ENCODE measurements at regions of chr12 and their contacts with region 1.

Region 1: GRCh38 chr12:1117970-1118563 is 127.0 kb downstream of the ERC1 start:
- DNase-seq: peak; percentile 60 to 94 (median 79)
- H3K4me3 ChIP-seq: no peak overlapping the region
- H3K27ac ChIP-seq: no peak overlapping the region
- H3K4me1 ChIP-seq: peaks cover 7 to 11% of the 10 kb centered on the region in 2 donors
- H3K27me3 ChIP-seq: no peaks in the 10 kb centered on the region
- CTCF ChIP-seq: peak; percentile 82 to 97 (median 94)
- POLR2A ChIP-seq: no peak

Region 2: GRCh38 chr12:1583421-1584078 is 465.5 kb after region 1 on chr12:
- intact Hi-C with region 1: loop called (anchors 5 to 10 kb)
- DNase-seq: peak; percentile 63 to 90 (median 75)
- H3K4me3 ChIP-seq: peak overlapping the region in 1 of 4 donors; percentile 43
- H3K27ac ChIP-seq: no peak overlapping the region
- H3K4me1 ChIP-seq: peaks cover 0 to 11% of the 10 kb centered on the region in 2 donors
- H3K27me3 ChIP-seq: no peaks in the 10 kb centered on the region
- CTCF ChIP-seq: peak; percentile 60 to 96 (median 91)
- POLR2A ChIP-seq: no peak

Measured in adrenal gland (tissue), 19 donors.